ENCODE measurements at regions of chr12 and their contacts with region 1.

Region 1: DNA sequence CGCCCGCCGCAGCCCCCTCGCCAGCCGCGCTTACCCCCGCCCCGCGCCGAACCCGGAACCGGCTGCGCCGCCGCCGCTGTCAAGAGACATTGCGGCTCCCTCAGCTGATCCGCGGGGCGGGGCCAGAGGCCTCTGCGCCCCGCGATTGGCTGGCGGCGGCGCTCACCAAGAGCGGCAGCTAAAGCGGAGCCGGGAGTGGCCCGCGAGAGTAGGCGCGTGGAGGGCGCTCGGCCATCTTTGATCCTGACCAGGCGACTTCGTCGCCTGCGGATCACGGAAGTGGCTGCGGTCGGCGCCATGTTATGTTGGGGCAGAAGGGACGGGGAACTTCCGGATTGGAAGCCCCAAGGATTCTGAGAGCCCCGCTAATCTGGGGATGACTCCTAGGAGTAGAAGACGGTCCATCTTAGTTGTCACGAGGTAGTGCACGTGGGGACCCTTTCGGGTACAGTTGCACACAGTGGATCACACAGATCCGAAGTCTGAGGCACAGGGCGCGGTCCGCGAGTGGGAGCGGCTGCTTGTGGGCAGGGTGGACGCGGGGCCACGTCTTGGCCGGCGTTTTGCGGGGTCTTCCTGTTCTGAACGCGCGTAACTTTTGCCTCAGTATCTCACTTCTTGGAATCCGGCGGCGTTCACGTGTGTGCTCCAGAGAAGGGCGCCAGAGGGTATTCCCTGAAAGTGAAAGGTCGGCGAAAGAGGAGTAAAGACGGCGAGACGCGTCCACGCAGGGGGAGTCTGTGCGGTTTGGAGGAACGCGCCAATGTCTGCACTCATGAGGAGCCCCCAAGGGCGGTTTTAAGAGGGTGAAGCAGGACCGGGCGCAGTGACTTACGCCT is at the start of gene CHFR:
- DNase-seq: peak; percentile 93
- H3K4me3 Mint-ChIP-seq: peak within 1 kb of the TSS; percentile 99
- H3K27ac Mint-ChIP-seq: peak within 1 kb of the TSS; percentile 100
- H3K4me1 Mint-ChIP-seq: peaks cover 15% of the 10 kb centered on the region
- H3K27me3 Mint-ChIP-seq: peaks cover 2% of the 10 kb centered on the region
- total RNA-seq, gene CHFR: 63.7 and 65.6 TPM in 2 replicates

Region 2: DNA sequence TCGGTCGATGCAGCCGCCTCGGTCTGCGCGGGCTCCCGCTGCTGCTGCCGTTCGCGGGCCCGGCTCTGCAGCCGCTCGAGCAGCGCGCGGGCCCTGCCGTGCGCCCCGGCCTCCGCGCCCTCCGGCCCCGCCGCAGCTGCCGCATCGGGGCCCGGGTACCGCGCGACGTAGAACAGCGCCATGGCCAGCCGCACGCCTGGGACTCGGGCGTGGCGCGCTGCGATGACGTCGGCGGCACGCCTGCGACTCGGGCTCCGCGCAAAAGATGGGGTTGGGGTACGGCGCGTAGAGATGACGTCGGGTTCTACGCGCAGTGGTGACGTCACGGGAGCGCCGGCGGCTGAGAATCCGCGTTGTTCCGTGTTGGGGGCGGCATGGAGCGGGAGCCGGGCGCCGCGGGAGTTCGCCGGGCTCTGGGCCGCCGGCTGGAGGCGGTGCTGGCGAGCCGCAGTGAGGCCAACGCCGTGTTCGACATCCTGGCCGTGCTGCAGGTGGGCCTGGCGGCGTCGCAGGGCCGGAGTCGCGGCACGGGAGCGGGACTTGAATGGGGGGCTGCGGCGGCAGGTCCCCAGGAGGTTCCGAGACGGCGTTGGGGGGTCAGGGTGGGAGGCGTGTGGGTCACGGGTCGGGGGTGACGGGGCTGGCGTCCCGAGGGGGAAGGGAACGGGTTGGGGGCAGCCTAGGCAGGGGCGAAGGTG is 743.5 kb before region 1 on chr12 and contains the starts of genes DDX51 and NOC4L:
- intact Hi-C with region 1: loop called (anchors 2 kb)
- DNase-seq: peak; percentile 96
- H3K4me3 Mint-ChIP-seq: peak within 1 kb of the TSS; percentile 90
- H3K27ac Mint-ChIP-seq: peak within 1 kb of the TSS; percentile 95
- H3K4me1 Mint-ChIP-seq: peaks cover 12% of the 10 kb centered on the region
- H3K27me3 Mint-ChIP-seq: peaks cover 2% of the 10 kb centered on the region
- total RNA-seq, gene DDX51: 48.8 and 55.0 TPM in 2 replicates
- total RNA-seq, gene NOC4L: 49.5 and 51.3 TPM in 2 replicates

Region 3: DNA sequence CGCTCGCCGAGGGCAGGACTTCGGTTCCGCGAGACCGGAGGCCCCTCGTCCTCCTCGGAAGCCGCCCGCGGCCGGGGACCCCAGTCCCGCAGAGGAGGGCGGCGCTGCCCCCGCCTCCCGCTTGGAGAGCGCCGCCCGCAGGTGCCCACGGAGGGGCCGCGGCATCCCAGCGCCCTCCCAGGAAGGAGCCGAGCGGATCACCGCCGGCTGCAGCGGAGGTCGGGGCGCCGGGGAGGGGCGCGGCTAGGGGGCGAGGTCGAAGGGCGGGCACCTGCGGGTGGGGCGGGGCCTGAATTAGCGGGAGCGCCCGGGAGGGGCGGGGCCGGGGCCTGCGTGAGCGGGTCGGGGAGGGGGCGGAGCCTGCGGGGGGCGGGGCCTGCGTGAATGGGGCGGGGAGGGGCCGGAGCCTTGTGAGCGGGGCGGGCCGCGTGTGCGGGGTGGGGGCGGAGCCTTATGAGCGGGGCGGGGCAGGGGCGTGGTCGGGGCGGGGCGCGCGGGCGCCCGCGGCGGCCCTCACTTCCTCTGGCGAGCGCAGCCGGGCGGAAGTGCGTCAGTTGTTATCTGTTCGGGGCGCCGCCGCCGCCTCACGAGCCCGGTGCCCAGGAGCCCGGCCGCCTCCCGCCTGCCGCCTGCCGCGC is 398.0 kb before region 1 on chr12 and contains the start of gene FBRSL1:
- intact Hi-C with region 1: loop called (anchors 5 kb)
- DNase-seq: peak; percentile 86
- H3K4me3 Mint-ChIP-seq: peak within 1 kb of the TSS; percentile 87
- H3K27ac Mint-ChIP-seq: peak within 1 kb of the TSS; percentile 90
- H3K4me1 Mint-ChIP-seq: peaks cover 45% of the 10 kb centered on the region
- H3K27me3 Mint-ChIP-seq: peaks cover 1% of the 10 kb centered on the region
- total RNA-seq, gene FBRSL1: 75.8 and 80.2 TPM in 2 replicates

Region 4: GRCh38 chr12:132761032-132761920 is 126.5 kb before region 1 on chr12 and contains the start of gene ANKLE2:
- intact Hi-C with region 1: loop called (anchors 1 kb)
- DNase-seq: peak; percentile 74
- H3K4me3 Mint-ChIP-seq: peak within 1 kb of the TSS; percentile 93
- H3K27ac Mint-ChIP-seq: peak within 1 kb of the TSS; percentile 96
- H3K4me1 Mint-ChIP-seq: peaks cover 24% of the 10 kb centered on the region
- H3K27me3 Mint-ChIP-seq: no peaks in the 10 kb centered on the region
- total RNA-seq, gene ANKLE2: 151 and 156 TPM in 2 replicates

Region 5: DNA sequence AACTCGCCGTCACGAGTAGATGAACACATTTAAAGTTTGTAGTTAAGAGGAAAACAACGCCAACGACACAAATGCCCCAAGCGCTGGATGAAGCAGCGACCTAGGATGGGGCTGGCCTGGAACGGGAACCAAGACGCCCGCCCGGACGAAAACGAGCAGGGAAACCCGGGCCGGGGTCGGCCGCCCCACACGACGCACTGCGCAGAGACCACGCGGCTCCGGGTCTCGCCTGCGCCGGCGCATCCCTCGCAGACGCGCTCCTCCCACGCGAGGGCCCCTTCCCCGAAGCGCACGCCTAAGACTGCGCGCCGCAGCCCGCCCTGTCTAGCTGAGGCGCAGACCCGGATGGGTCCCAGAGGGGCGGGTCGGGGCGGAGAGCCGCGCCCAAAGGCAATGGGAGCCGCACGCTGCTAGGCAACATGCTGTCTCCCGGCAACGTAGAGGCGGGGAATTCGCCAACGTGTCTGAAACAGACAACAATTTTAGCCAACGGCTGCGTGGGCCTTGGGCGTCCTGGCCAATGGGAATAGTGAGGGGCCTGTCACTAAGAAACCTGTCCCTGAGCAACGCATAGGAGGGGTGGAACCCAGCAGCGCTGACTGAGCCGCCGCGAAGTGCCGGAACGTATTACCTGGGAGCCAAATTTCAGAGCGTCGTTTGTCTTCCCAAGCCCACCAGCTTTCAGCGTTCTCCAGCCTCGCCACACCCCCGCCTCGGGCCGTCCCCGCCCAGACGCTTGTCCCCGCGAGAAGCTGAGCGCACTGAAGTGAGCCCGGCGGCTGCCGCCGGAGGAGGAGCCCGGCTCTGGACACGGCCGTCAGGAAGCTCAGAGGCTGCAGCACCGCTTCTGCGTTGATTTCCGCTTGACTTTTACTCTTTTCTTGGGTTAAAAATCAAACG is 20.7 kb after region 1 on chr12:
- intact Hi-C with region 1: loop called (anchors 1 kb)
- DNase-seq: peak; percentile 92
- H3K4me3 Mint-ChIP-seq: peak overlapping the region; percentile 88
- H3K27ac Mint-ChIP-seq: peak overlapping the region; percentile 91
- H3K4me1 Mint-ChIP-seq: no peaks in the 10 kb centered on the region
- H3K27me3 Mint-ChIP-seq: peaks cover 11% of the 10 kb centered on the region

Region 6: GRCh38 chr12:132986001-132986912 is 98.5 kb after region 1 on chr12 and contains the start of gene ZNF26:
- intact Hi-C with region 1: loop called (anchors 2 kb)
- DNase-seq: peak; percentile 84
- H3K4me3 Mint-ChIP-seq: peak within 1 kb of the TSS; percentile 90
- H3K27ac Mint-ChIP-seq: peak within 1 kb of the TSS; percentile 92
- H3K4me1 Mint-ChIP-seq: peaks cover 22% of the 10 kb centered on the region
- H3K27me3 Mint-ChIP-seq: no peaks in the 10 kb centered on the region
- total RNA-seq, gene ZNF26: 18.2 and 22.1 TPM in 2 replicates

Region 7: DNA sequence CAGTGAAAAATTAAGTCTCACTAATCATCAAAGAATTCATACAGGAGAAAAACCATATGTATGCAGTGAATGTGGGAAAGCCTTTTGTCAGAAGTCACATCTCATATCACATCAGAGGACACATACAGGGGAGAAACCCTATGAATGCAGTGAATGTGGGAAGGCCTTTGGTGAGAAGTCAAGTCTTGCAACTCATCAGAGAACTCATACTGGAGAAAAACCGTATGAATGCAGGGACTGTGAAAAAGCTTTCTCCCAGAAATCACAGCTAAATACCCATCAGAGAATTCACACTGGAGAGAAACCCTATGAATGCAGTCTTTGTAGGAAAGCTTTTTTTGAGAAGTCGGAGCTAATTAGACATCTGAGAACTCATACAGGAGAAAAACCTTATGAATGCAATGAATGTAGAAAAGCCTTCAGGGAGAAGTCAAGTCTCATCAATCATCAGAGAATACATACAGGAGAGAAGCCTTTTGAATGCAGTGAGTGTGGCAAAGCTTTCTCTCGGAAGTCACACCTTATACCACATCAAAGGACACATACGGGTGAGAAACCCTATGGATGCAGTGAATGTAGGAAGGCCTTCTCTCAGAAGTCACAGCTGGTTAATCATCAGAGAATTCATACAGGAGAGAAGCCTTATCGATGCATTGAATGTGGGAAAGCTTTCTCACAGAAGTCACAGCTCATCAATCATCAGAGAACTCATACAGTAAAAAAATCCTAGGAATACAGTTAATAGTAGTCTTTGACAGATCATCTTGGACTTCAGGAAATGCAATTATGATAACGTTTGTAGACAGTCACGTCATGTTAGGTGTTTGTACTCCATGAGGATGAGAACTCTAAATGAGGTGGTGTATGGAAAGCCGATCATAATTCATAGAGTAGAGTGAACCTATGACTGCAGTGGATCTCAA is 170.7 kb after region 1 on chr12:
- intact Hi-C with region 1: no loop called
- DNase-seq: no peak
- H3K4me3 Mint-ChIP-seq: no peak overlapping the region
- H3K27ac Mint-ChIP-seq: no peak overlapping the region
- H3K4me1 Mint-ChIP-seq: no peaks in the 10 kb centered on the region
- H3K27me3 Mint-ChIP-seq: no peaks in the 10 kb centered on the region

Region 8: GRCh38 chr12:133130038-133130807 is 242.5 kb after region 1 on chr12 and contains the starts of genes ZNF10 and ZNF891:
- intact Hi-C with region 1: loop called (anchors 1 kb)
- DNase-seq: peak; percentile 94
- H3K4me3 Mint-ChIP-seq: peak within 1 kb of the TSS; percentile 94
- H3K27ac Mint-ChIP-seq: peak within 1 kb of the TSS; percentile 98
- H3K4me1 Mint-ChIP-seq: peaks cover 21% of the 10 kb centered on the region
- H3K27me3 Mint-ChIP-seq: no peaks in the 10 kb centered on the region
- total RNA-seq, gene ZNF10: 5.1 and 6.4 TPM in 2 replicates
- total RNA-seq, gene ZNF891: 2.3 and 2.4 TPM in 2 replicates

Measured in activated T-helper 1 cell treated with anti-CD3 and anti-CD28 coated beads, Interleukin-12 subunit alpha, Interleukin-12 subunit beta, Interleukin-2, Interleukin-4 antibody, amounts not matched to agents 30 ng/mL and 10 ng/mL and 1 ng/mL, durations not matched to agents 14 hours and 24 hours and 36 hours (primary cell).